Cardiac septum (tissue), 1 donor: ENCODE measurements at regions of chr2 and their contacts with region 1.

Region 1: DNA sequence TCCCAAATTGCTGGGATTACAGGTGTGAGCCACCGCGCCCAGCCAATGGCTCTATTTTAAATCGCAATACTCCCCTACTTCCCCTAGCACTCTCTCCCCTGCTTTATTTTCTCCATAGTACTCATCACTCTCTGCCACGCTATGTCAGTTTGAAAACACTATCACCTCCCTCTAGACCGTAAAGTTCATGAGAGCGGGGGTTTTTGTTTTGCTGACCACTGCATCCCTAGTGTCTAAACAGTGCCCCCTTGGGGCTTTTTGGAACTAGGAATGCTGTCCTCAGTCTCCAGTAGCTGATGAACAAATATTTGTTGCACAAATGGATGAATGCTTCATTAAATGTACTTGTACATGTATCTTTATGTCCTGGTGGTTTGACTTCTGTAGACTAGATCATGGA is 44.1 kb downstream of the ATOH8 start:
- DNase-seq: peak; percentile 46

Region 2: DNA sequence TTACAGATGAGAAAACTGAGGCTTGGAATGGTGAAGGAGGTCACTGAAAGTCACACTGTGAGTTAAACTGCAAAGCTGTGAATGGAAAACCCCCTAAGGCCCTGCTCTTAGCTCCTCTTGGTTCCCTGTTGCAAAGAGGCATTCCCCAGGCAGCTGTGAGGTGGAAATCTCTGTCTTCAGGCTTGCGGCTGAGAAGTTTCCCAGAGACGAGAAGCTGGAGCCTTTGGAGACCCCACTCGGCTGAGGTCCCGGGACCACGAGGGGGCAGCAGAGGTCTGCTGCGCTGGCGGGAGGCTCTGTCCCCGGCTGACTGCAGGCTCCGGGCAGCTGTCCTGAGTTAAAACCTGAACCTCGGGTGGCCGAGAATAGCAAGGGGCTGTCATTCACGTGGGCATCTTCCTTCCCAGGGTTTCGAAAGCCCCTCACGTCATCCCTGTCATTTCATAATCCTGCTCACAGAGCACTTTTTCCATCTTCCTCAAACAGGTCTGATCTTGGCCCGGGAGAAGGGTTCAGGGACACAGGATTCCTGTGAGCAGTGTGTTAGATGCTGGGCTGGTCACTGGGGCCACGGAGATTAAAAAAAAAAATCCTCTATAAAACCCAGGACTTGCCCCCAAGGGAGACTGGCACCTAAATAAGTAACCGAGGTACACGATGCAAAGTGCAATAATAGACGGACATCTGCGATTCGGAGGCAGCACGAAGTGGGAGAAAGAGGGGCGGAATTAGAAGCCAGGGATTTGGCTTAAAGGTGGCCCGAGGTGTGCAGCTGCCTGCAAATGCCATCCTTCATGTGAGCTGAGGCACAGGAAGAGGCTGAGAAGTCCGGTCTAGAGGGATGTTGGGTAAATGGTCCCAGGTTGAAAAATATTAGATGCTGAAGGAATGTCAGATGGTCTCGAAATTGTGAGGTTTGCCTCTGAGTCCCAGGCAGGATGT is 68.8 kb before region 1 on chr2:
- intact Hi-C with region 1: loop called (anchors 2 kb)
- DNase-seq: peak; percentile 95

Region 3: GRCh38 chr2:85750587-85751575 is 47.0 kb before region 1 on chr2:
- intact Hi-C with region 1: loop called (anchors 2 kb)
- DNase-seq: peak; percentile 86